A549 (cell line): ENCODE measurements at regions of chr18 and their contacts with region 1.

Region 1: DNA sequence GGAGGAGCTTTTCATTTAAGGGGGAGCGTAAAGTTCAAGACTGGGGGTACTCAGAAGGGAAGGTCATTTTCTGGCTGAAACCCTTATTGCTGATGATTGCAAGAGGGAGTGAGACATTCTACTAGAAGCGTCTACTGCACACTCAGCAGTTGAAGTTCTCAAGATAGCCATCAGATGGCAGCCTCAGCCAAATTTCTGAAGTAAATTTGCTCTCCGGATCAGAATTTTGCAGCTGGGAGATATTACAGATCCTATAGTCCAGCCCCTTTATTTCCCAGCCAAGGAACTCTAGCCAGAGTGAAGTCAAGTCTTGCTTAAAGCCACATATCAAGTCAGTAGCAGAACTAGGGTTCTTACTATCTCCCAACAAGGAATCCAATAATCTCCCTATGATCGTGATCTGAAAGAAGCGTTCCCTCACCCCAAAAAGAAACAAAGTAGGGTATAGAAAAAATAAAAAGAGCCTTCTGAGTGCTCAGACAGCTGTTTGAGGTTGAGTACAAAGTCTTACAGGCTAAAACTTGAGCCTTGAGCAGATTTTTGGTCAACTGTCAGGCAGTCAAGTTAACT is 24.0 kb downstream of the RAX start:
- DNase-seq: peak; percentile 38 to 69
- ATAC-seq: peak; percentile 70 to 92
- H3K4me3 ChIP-seq: no peak overlapping the region
- H3K27ac ChIP-seq: no peak overlapping the region
- H3K4me1 ChIP-seq: no peaks in the 10 kb centered on the region
- CTCF ChIP-seq: peak; percentile 54
- EP300 ChIP-seq: no peak
- POLR2A ChIP-seq: no peak
- RAD21 ChIP-seq: peak; percentile 68 to 69

Region 2: DNA sequence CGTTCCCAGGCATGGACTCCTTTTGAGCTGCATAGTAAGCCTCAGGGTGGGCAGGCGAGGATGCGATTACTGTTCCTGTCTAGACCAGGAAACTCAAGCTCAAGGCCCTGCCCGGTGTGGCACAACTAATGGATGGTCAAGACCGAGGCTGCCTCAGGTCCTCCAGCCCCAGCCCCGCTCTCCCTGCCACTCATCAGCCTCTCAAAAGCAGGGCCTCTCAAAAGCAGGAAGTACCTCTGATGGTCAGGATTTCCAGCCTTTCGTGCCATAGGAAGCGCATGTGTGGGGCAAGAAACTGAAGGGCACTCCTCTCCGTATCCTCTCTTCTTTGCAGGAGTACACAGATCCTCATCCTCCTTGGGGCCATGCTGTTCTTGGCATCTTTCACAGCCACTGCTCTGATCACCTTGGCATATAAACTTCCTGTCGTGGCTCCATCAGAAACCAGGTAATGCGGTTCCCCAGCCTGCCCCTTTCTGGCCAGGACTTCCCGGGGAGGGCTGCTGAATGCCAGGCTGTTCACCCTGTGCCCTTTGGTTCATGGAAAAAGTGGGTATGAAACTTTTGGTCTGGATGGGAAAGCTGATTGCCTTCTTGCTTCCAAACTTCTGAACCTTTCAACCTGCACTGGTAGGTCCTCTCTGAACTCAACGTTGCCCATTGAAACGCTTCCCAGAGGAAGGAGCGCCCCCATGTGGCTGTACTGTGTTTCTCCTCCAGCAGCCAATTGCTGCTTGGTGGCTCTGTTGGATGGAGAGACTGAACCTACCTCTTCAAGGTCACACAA is 192.4 kb before region 1 on chr18:
- CTCF ChIA-PET with region 1: no interaction called
- POLR2A ChIA-PET with region 1: no interaction called
- DNase-seq: peak in 1 of 2 experiments; percentile 74
- ATAC-seq: peak; percentile 47 to 86; a peak in 3 of 6 replicates
- H3K4me3 ChIP-seq: no peak overlapping the region
- H3K27ac ChIP-seq: peak overlapping the region; percentile 65 to 78
- H3K4me1 ChIP-seq: peaks cover 16% of the 10 kb centered on the region; the same call in 2 of the 3 replicates
- CTCF ChIP-seq: peak; percentile 46
- EP300 ChIP-seq: no peak
- POLR2A ChIP-seq: no peak
- RAD21 ChIP-seq: peak; percentile 74 to 86

Region 3: GRCh38 chr18:59155153-59155552 is 94.1 kb before region 1 on chr18:
- CTCF ChIA-PET with region 1: no interaction called
- POLR2A ChIA-PET with region 1: no interaction called
- DNase-seq: peak in 1 of 2 experiments; percentile 2
- ATAC-seq: no peak
- H3K4me3 ChIP-seq: no peak overlapping the region
- H3K27ac ChIP-seq: no peak overlapping the region
- H3K4me1 ChIP-seq: no peaks in the 10 kb centered on the region
- CTCF ChIP-seq: no peak
- EP300 ChIP-seq: no peak
- POLR2A ChIP-seq: no peak
- RAD21 ChIP-seq: no peak

Region 4: DNA sequence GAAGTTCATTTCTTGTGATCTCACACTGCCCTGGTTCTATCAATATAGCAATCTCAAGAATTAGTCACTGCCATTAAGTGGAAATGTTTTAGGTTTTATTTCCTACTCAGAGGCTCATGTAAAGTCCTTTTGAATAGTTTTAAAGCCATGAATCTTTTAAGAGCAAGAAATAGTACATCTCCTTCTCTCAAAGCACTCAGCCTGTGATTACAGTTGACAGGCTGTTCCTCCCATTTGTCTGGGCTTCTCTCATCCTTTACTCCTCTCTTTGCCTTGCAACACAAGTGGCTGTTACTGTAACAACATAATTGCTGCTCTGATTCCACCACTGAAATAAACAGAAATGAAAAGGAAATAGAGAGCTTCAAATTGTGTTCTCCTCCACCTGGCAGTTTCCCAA is 10.9 kb before region 1 on chr18:
- CTCF ChIA-PET with region 1: interaction called, 14 read pairs
- POLR2A ChIA-PET with region 1: no interaction called
- DNase-seq: no peak
- ATAC-seq: no peak
- H3K4me3 ChIP-seq: no peak overlapping the region
- H3K27ac ChIP-seq: no peak overlapping the region
- H3K4me1 ChIP-seq: no peaks in the 10 kb centered on the region
- CTCF ChIP-seq: no peak
- EP300 ChIP-seq: no peak
- POLR2A ChIP-seq: no peak
- RAD21 ChIP-seq: no peak

Region 5: GRCh38 chr18:59268721-59269562 is 19.7 kb after region 1 on chr18:
- CTCF ChIA-PET with region 1: interaction called, 40 read pairs
- POLR2A ChIA-PET with region 1: no interaction called
- DNase-seq: peak; percentile 57 to 58
- ATAC-seq: peak; percentile 68 to 79
- H3K4me3 ChIP-seq: peak overlapping the region; percentile 45
- H3K27ac ChIP-seq: peak overlapping the region in 1 of 2 experiments; percentile 51; a peak in 3 of 6 replicates
- H3K4me1 ChIP-seq: no peaks in the 10 kb centered on the region
- CTCF ChIP-seq: peak; percentile 63
- EP300 ChIP-seq: no peak
- POLR2A ChIP-seq: no peak
- RAD21 ChIP-seq: peak in 1 of 2 experiments; percentile 30; a peak in 3 of 5 replicates

Region 6: GRCh38 chr18:59308248-59308937 is 59.1 kb after region 1 on chr18:
- CTCF ChIA-PET with region 1: interaction called, 47 read pairs
- POLR2A ChIA-PET with region 1: no interaction called
- DNase-seq: peak; percentile 55 to 61
- ATAC-seq: peak; percentile 98 to 99
- H3K4me3 ChIP-seq: peak overlapping the region; percentile 44
- H3K27ac ChIP-seq: no peak overlapping the region; a peak in 1 of 6 replicates
- H3K4me1 ChIP-seq: no peaks in the 10 kb centered on the region
- CTCF ChIP-seq: peak; percentile 77
- EP300 ChIP-seq: no peak
- POLR2A ChIP-seq: no peak
- RAD21 ChIP-seq: peak; percentile 44 to 72